CD8-positive, alpha-beta T cell (primary cell): ENCODE measurements at regions of chr9 and their contacts with region 1.

Region 1: DNA sequence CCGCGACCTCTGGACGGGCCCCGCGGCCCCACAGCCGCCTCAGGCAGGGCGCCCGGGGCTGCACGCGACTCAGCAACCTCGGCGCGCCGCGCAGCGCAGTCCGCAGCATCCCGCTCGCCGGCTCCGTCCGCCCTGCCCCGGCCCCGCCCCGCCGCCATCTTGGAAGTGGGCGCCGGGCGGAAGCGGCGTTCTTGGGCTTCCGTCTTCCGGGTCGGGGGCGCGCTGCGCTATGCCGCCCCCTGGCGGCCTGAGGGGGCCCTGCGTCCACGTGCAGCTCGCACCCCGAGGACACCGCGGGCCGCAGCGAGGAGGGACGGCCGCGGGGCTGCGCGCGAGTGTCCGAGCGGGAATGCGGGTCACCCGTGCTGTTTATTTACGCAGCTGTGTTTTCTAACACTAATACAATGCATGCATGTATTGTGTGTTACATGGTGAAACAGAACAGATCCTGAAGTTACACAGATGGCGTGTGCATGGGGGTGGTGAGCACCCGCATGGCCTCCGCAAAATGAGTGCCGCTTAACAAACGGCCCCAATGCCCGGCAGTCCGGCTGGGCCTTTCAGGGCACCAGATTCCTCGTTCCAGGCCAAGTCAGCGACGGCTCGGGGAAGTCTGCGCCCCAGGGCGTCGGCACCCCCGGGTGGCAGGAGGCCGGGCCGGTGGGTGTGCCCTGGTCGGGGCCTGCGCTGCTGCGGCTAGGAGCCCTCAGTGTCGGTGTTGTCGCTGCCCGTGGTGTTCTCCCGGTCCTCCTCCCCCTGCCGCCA is at the start of gene DNLZ:
- DNase-seq: peak; percentile 67 to 94 (median 86)
- ATAC-seq: peak; percentile 77
- H3K4me3 ChIP-seq: peak within 1 kb of the TSS; percentile 51 to 72
- H3K4me3 Mint-ChIP-seq: peak within 1 kb of the TSS; percentile 83
- H3K27ac ChIP-seq: peak within 1 kb of the TSS; percentile 53 to 70
- H3K27ac Mint-ChIP-seq: peak within 1 kb of the TSS; percentile 73
- H3K4me1 ChIP-seq: peaks cover 6% of the 10 kb centered on the region
- H3K4me1 Mint-ChIP-seq: peaks cover 9% of the 10 kb centered on the region
- H3K27me3 ChIP-seq: no peaks in the 10 kb centered on the region
- H3K27me3 Mint-ChIP-seq: no peaks in the 10 kb centered on the region
- CTCF ChIP-seq: peak; percentile 97
- total RNA-seq, gene DNLZ: 21.0 to 22.1 TPM

Region 2: GRCh38 chr9:136267261-136268111 is 96.3 kb before region 1 on chr9:
- CTCF ChIA-PET with region 1: no interaction called
- POLR2A ChIA-PET with region 1: no interaction called
- intact Hi-C with region 1: loop called in 1 of 2 experiments (anchors 1 kb)
- DNase-seq: peak; percentile 74 to 94 (median 85)
- ATAC-seq: peak; percentile 98
- H3K4me3 ChIP-seq: peak overlapping the region; percentile 74 to 80
- H3K4me3 Mint-ChIP-seq: peak overlapping the region; percentile 81
- H3K27ac ChIP-seq: peak overlapping the region; percentile 51 to 58
- H3K27ac Mint-ChIP-seq: peak overlapping the region; percentile 58
- H3K4me1 ChIP-seq: peaks cover 6% of the 10 kb centered on the region
- H3K4me1 Mint-ChIP-seq: peaks cover 6% of the 10 kb centered on the region
- H3K27me3 ChIP-seq: peaks cover 0 to 2% of the 10 kb centered on the region in 2 experiments
- H3K27me3 Mint-ChIP-seq: no peaks in the 10 kb centered on the region
- CTCF ChIP-seq: peak; percentile 18

Region 3: DNA sequence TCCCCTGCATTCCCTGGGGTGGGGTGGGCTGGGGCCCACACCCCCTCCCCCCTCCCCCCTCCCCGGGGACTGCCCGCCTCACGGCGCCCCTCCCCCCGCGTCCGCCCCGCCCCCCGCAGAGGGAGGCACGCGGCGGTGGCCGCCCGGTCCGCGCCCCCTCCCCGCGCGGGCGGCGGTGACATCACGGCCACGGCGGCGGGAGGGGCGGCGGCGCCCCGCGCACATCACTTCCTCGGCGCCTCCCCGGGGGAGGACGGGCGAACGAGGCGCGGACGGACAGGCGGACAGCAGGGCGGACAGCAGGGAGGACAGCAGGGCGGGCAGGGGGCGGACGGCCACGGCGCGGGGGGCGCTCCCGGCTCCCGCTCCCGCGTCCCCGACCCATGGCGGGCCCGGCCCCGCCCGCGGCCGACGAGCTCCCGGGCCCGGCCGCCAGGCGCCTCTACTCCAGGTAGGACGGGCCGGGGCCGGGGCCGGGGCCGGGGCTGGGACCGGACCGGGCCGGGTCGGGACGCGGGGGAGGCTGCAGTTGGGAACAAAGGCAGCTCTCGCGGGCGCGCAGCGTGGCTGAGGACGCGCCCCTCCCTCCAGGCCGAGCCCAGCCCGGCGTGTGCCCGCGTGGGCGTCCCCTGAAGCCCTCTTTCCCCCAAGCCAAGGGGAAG is 36.3 kb before region 1 on chr9 and contains the start of gene GPSM1:
- CTCF ChIA-PET with region 1: no interaction called
- POLR2A ChIA-PET with region 1: no interaction called
- intact Hi-C with region 1: loop called in 1 of 2 experiments (anchors 1 kb)
- DNase-seq: peak in 7 of 9 experiments; percentile 18 to 61 (median 40)
- ATAC-seq: peak; percentile 72
- H3K4me3 ChIP-seq: peak within 1 kb of the TSS; percentile 23 to 29
- H3K4me3 Mint-ChIP-seq: peak within 1 kb of the TSS; percentile 73
- H3K27ac ChIP-seq: no peak within 1 kb of the TSS
- H3K27ac Mint-ChIP-seq: no peak within 1 kb of the TSS
- H3K4me1 ChIP-seq: peaks cover 10% of the 10 kb centered on the region
- H3K4me1 Mint-ChIP-seq: peaks cover 4% of the 10 kb centered on the region
- H3K27me3 ChIP-seq: no peaks in the 10 kb centered on the region
- H3K27me3 Mint-ChIP-seq: no peaks in the 10 kb centered on the region
- CTCF ChIP-seq: no peak
- total RNA-seq, gene GPSM1: 5.4 to 6.6 TPM

Region 4: GRCh38 chr9:136400038-136400834 is 36.4 kb after region 1 on chr9 and contains the start of gene SNAPC4:
- CTCF ChIA-PET with region 1: interaction called, 8 read pairs
- POLR2A ChIA-PET with region 1: interaction called, 3 read pairs
- intact Hi-C with region 1: loop called (anchors 1 kb)
- DNase-seq: peak; percentile 69 to 94 (median 86)
- ATAC-seq: peak; percentile 70
- H3K4me3 ChIP-seq: peak within 1 kb of the TSS; percentile 60 to 66
- H3K4me3 Mint-ChIP-seq: peak within 1 kb of the TSS; percentile 85
- H3K27ac ChIP-seq: peak within 1 kb of the TSS in 1 of 2 experiments; percentile 47
- H3K27ac Mint-ChIP-seq: peak within 1 kb of the TSS; percentile 67
- H3K4me1 ChIP-seq: peaks cover 49% of the 10 kb centered on the region
- H3K4me1 Mint-ChIP-seq: peaks cover 40% of the 10 kb centered on the region
- H3K27me3 ChIP-seq: no peaks in the 10 kb centered on the region
- H3K27me3 Mint-ChIP-seq: no peaks in the 10 kb centered on the region
- CTCF ChIP-seq: peak; percentile 93
- total RNA-seq, gene SNAPC4: 6.7 TPM

Region 5: GRCh38 chr9:136439550-136440408 is 76.0 kb after region 1 on chr9 and contains the start of gene INPP5E:
- CTCF ChIA-PET with region 1: interaction called, 3 read pairs
- POLR2A ChIA-PET with region 1: no interaction called
- intact Hi-C with region 1: loop called in 1 of 2 experiments (anchors 1 kb)
- DNase-seq: peak; percentile 72 to 94 (median 82)
- ATAC-seq: peak; percentile 82
- H3K4me3 ChIP-seq: peak within 1 kb of the TSS; percentile 56 to 68
- H3K4me3 Mint-ChIP-seq: peak within 1 kb of the TSS; percentile 83
- H3K27ac ChIP-seq: peak within 1 kb of the TSS; percentile 25 to 42
- H3K27ac Mint-ChIP-seq: peak within 1 kb of the TSS; percentile 37
- H3K4me1 ChIP-seq: peaks cover 27% of the 10 kb centered on the region
- H3K4me1 Mint-ChIP-seq: peaks cover 26% of the 10 kb centered on the region
- H3K27me3 ChIP-seq: no peaks in the 10 kb centered on the region
- H3K27me3 Mint-ChIP-seq: no peaks in the 10 kb centered on the region
- CTCF ChIP-seq: peak; percentile 60
- total RNA-seq, gene INPP5E: 11.4 to 12.7 TPM

Region 6: GRCh38 chr9:137605121-137606004 is 1241.6 kb after region 1 on chr9 and contains the start of gene ARRDC1:
- CTCF ChIA-PET with region 1: no interaction called
- POLR2A ChIA-PET with region 1: no interaction called
- intact Hi-C with region 1: loop called in 1 of 2 experiments (anchors 5 kb)
- DNase-seq: peak; percentile 89 to 97 (median 93)
- ATAC-seq: peak; percentile 81
- H3K4me3 ChIP-seq: peak within 1 kb of the TSS; percentile 46 to 70
- H3K4me3 Mint-ChIP-seq: peak within 1 kb of the TSS; percentile 82
- H3K27ac ChIP-seq: peak within 1 kb of the TSS in 1 of 2 experiments; percentile 52
- H3K27ac Mint-ChIP-seq: peak within 1 kb of the TSS; percentile 80
- H3K4me1 ChIP-seq: peaks cover 15% of the 10 kb centered on the region
- H3K4me1 Mint-ChIP-seq: peaks cover 20% of the 10 kb centered on the region
- H3K27me3 ChIP-seq: no peaks in the 10 kb centered on the region
- H3K27me3 Mint-ChIP-seq: no peaks in the 10 kb centered on the region
- CTCF ChIP-seq: no peak
- total RNA-seq, gene ARRDC1: 30.8 to 35.9 TPM